WTC11 (cell line): ENCODE measurements at regions of chr14 and their contacts with region 1.

Region 1: DNA sequence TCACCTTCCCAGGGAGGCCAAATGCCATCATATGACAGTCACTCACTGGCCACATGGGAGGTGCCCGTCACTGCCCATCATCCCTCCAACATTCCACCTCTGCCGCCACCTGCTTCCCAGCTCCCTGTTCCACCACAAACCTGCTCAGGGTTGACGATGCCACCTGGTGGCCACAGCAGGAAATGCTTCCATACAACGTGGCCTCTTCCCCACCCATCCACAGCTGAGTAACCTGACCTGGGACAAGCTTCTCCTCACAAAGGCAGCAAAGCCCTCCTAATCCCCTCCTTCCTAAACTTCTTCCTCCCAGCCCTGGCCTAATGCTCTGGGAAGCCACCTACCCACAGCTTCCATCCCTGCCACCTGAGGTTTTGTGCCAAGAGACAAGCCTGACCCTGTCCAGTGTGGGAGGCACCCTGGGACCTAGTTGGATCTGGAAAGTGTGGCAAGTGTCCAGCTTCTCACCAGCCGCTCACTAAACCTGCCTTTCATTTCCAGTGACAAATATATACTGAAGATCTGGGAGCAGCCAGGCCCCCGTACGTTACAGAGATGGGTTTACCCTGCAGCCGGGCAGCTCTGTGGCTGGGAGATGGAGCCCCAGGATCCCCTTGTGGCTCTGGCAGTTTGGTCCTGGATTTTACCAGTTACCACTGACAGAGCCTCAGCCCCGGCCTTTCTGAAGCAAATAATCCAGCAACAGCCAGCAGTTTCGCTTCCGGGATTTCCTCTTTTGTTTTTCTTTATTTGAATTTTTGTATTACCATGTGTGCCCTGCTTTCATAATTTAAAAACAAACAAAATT is 4.2 kb downstream of the DEGS2 start:
- DNase-seq: peak; percentile 89
- ATAC-seq: peak; percentile 69
- H3K4me3 Mint-ChIP-seq: no peak overlapping the region
- H3K27ac Mint-ChIP-seq: no peak overlapping the region
- H3K4me1 Mint-ChIP-seq: peaks cover 10% of the 10 kb centered on the region; the same call in 1 of the 2 replicates
- H3K27me3 Mint-ChIP-seq: peaks cover 51% of the 10 kb centered on the region
- CTCF ChIP-seq: peak; percentile 84

Region 2: DNA sequence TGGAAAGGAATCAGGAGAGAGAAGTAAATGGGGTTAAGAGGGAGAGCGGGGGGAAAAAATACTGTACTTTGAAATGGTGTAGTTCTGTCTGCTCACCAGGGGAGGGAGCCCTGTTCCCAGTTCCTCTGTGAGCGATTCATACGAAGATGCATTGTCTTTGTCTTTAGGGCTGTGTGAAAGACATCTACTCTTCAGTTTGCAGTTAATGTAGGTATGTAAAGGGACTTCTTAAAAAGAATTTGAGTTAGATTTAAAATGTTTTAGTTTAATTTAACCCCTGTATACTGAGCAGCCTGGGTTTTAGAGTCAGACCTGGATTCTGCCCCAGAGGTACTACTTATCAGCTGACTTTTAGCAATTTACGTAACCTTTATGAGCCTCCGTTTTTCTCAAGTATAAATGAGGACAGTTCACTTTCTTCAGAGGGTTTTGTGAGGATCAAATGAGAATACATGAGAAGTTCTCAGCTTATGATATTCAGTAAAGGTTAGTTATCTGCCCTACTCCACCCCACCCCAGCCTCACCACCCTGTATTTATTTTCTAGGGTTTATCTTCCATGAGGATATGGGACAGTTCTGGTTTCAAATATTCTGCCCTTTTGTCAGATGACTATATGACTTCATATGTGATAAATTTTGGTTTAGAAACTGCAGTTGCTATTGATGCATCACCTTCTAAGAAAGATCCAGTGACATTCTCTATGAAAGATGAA is 172.6 kb before region 1 on chr14:
- CTCF ChIA-PET with region 1: interaction called, 11 read pairs
- POLR2A ChIA-PET with region 1: no interaction called
- DNase-seq: peak; percentile 52
- ATAC-seq: peak; percentile 89
- H3K4me3 Mint-ChIP-seq: no peak overlapping the region
- H3K27ac Mint-ChIP-seq: no peak overlapping the region
- H3K4me1 Mint-ChIP-seq: peaks cover 7% of the 10 kb centered on the region; the same call in 1 of the 2 replicates
- H3K27me3 Mint-ChIP-seq: no peaks in the 10 kb centered on the region
- CTCF ChIP-seq: peak; percentile 53; the same call in 1 of the 2 replicates

Region 3: DNA sequence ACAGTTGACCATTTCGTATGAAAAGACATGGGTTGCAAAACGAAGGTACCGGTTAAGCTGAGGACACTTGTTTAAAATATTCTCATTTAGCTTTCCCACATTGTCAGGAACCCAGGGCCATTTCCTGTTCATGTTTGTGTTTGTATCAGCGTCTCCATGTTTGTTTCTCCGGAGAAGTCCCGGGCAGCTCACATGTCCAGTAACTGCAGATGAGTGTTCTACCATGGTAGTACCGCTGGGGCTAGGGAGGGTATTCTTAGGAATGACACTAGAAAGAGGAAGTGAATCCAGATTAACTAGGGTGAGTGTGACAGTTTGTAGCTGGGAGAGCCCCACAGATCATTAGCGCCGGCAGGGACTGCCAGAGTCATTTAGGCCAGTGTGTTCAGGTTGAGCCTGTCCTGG is 140.0 kb before region 1 on chr14:
- CTCF ChIA-PET with region 1: no interaction called
- POLR2A ChIA-PET with region 1: no interaction called
- DNase-seq: no peak
- ATAC-seq: no peak
- H3K4me3 Mint-ChIP-seq: no peak overlapping the region
- H3K27ac Mint-ChIP-seq: peak overlapping the region; percentile 59; the same call in 1 of the 2 replicates
- H3K4me1 Mint-ChIP-seq: peaks cover 14% of the 10 kb centered on the region
- H3K27me3 Mint-ChIP-seq: no peaks in the 10 kb centered on the region
- CTCF ChIP-seq: no peak

Region 4: DNA sequence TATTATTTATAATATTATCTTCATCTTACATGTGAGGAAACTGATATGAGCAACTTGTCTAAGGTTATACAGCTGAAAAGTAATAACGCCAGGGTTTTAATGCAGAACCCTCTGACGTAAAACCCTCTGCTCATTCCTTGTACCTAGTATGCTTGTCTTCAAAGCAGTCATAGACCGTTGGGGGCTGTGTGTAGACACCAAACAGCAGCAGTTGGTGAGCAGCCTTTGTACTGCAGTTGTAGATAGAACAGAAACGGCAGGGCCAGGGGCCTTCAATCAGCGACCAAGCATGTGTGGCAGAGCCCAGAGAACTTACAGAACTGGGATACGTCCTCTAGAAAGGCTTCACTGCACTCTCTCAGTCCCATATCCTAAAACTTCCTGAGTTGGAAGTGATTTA is 61.9 kb before region 1 on chr14:
- CTCF ChIA-PET with region 1: no interaction called
- POLR2A ChIA-PET with region 1: no interaction called
- DNase-seq: no peak
- ATAC-seq: no peak
- H3K4me3 Mint-ChIP-seq: no peak overlapping the region
- H3K27ac Mint-ChIP-seq: no peak overlapping the region; the same call in 1 of the 2 replicates
- H3K4me1 Mint-ChIP-seq: no peaks in the 10 kb centered on the region
- H3K27me3 Mint-ChIP-seq: no peaks in the 10 kb centered on the region
- CTCF ChIP-seq: no peak

Region 5: GRCh38 chr14:100108042-100108825 is 47.0 kb before region 1 on chr14:
- CTCF ChIA-PET with region 1: interaction called, 29 read pairs
- POLR2A ChIA-PET with region 1: interaction called, 3 read pairs
- DNase-seq: peak; percentile 97
- ATAC-seq: peak; percentile 96
- H3K4me3 Mint-ChIP-seq: no peak overlapping the region
- H3K27ac Mint-ChIP-seq: peak overlapping the region; percentile 67; the same call in 1 of the 2 replicates
- H3K4me1 Mint-ChIP-seq: peaks cover 11% of the 10 kb centered on the region
- H3K27me3 Mint-ChIP-seq: no peaks in the 10 kb centered on the region
- CTCF ChIP-seq: peak; percentile 90

Region 6: DNA sequence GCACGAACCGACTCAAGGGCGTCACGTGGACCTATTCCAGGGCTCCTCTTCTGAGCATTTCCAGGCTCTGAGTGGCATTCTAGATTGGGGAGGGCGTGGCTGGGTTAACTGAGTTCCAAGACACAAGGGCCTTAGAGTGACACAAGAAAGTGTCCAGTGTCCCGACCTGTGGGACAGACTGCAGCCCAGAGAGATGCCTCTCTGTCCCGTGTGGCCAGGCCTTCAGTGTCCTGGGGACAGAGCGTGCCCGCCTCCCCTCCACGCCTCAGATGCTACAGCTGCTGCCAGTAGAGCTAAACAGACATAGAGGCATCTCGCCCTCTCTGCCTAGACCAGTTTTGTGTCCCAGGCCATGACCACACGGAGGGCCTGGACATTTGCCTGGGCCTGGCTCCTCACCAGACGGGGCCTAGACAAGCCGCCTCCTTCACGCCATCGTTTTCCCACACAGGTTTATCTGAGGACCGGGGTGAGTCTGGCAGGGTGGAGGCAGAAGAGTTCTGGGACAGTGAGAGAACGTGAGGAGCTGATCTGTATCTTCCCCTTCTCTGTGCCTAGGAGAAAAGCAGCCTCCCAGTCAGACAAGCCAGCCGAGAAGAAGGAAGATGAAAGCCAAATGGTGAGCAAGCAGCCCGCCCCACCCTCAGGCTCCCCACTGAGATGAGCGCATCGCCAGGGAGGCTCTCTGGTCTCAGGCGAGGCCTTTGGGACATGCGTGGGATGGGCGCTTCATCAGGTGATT is 22.9 kb before region 1 on chr14:
- CTCF ChIA-PET with region 1: interaction called, 14 read pairs
- POLR2A ChIA-PET with region 1: interaction called, 4 read pairs
- DNase-seq: no peak
- ATAC-seq: no peak
- H3K4me3 Mint-ChIP-seq: no peak overlapping the region
- H3K27ac Mint-ChIP-seq: 0 out of 2 replicates have a peak overlapping the region, but pooled peaks have one; percentile 41
- H3K4me1 Mint-ChIP-seq: peaks cover 12% of the 10 kb centered on the region
- H3K27me3 Mint-ChIP-seq: no peaks in the 10 kb centered on the region
- CTCF ChIP-seq: no peak

Region 7: DNA sequence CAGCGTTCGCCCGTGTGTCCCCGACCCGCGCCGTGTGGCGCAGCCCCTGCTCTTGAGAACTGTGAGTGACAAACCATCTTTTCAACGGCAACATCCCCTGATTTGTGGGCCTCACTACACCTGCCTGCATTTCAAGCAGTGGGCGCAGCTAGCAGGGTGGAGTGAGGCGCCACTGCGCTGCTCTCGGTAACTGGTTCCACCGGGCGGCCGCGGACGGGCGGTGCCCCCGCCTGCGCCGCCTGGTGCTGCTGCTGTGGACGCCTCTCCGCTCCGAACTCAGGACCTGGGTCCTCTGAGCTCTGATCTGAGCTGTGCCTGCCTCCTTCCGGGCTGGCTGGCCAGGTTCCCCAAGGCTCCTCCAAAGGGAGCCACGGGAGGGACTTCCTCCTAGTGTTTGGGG is 10.1 kb after region 1 on chr14:
- CTCF ChIA-PET with region 1: interaction called, 47 read pairs
- POLR2A ChIA-PET with region 1: interaction called, 3 read pairs
- DNase-seq: peak; percentile 60
- ATAC-seq: peak; percentile 90
- H3K4me3 Mint-ChIP-seq: peak overlapping the region; percentile 64
- H3K27ac Mint-ChIP-seq: 0 out of 2 replicates have a peak overlapping the region, but pooled peaks have one; percentile 44
- H3K4me1 Mint-ChIP-seq: peaks cover 10% of the 10 kb centered on the region
- H3K27me3 Mint-ChIP-seq: peaks cover 39% of the 10 kb centered on the region
- CTCF ChIP-seq: no peak

Region 8: GRCh38 chr14:100297302-100298300 is 142.4 kb after region 1 on chr14:
- CTCF ChIA-PET with region 1: no interaction called
- POLR2A ChIA-PET with region 1: no interaction called
- DNase-seq: no peak
- ATAC-seq: no peak; the same call in 1 of the 2 replicates
- H3K4me3 Mint-ChIP-seq: no peak overlapping the region
- H3K27ac Mint-ChIP-seq: peak overlapping the region; percentile 22; the same call in 1 of the 2 replicates
- H3K4me1 Mint-ChIP-seq: peaks cover 1% of the 10 kb centered on the region; the same call in 1 of the 2 replicates
- H3K27me3 Mint-ChIP-seq: no peaks in the 10 kb centered on the region
- CTCF ChIP-seq: no peak